CD8-positive, alpha-beta T cell (primary cell): ENCODE measurements at regions of chr11 and their contacts with region 1.

Region 1: DNA sequence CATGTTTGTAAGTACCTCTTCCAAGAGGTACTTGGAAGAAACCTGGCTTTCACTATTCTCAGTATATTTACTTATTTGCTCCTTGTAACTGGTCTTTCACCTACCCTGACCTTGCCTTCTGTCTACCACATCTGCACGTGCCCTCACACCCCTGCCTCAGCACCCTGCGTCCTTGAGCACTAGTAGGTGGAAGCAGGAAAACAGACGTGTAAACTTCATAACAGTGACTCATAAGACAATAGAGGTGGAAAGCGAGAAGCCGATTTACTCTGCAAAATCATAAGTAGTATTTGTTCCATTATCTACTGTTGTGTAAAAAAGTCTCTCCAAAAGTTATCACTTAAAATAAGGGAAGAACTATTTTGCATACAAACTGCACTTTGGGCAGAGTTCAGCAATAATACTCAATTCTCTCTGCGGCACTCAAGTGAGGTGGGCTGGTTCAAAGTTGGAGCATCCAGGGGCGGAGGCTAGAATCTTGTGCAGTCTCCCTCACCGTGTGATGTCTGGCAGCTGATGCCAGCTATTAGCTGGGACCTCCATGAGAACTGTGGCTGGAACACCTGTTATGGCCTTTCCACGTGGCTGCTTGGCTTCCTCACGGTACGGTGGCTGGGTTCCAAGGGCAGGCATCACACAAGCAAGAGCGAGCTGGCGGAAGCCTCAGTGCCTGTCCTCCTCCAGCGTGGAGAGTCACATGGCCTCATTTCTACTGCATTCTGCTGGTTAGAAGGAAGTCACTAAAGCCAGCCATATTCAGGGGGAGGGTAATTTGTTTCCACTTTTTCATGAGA is 30.4 kb downstream of the PACS1 start:
- DNase-seq: peak; percentile 31 to 88 (median 73)
- ATAC-seq: peak; percentile 90
- H3K4me3 ChIP-seq: peak overlapping the region; percentile 40 to 48
- H3K4me3 Mint-ChIP-seq: peak overlapping the region; percentile 82
- H3K27ac ChIP-seq: peak overlapping the region; percentile 45 to 82
- H3K27ac Mint-ChIP-seq: peak overlapping the region; percentile 95
- H3K4me1 ChIP-seq: peaks cover 70% of the 10 kb centered on the region
- H3K4me1 Mint-ChIP-seq: peaks cover 69% of the 10 kb centered on the region
- H3K27me3 ChIP-seq: no peaks in the 10 kb centered on the region
- H3K27me3 Mint-ChIP-seq: no peaks in the 10 kb centered on the region
- CTCF ChIP-seq: no peak

Region 2: GRCh38 chr11:66022401-66023185 is 77.9 kb before region 1 on chr11:
- CTCF ChIA-PET with region 1: no interaction called
- POLR2A ChIA-PET with region 1: no interaction called
- intact Hi-C with region 1: no loop called
- DNase-seq: peak; percentile 63 to 86 (median 80)
- ATAC-seq: peak; percentile 99
- H3K4me3 ChIP-seq: peak overlapping the region in 1 of 2 experiments; percentile 4
- H3K4me3 Mint-ChIP-seq: peak overlapping the region; percentile 43
- H3K27ac ChIP-seq: no peak overlapping the region
- H3K27ac Mint-ChIP-seq: no peak overlapping the region
- H3K4me1 ChIP-seq: peaks cover 7% of the 10 kb centered on the region
- H3K4me1 Mint-ChIP-seq: peaks cover 5% of the 10 kb centered on the region
- H3K27me3 ChIP-seq: no peaks in the 10 kb centered on the region
- H3K27me3 Mint-ChIP-seq: peaks cover 3% of the 10 kb centered on the region
- CTCF ChIP-seq: peak; percentile 97

Region 3: GRCh38 chr11:66112601-66113098 is 12.2 kb after region 1 on chr11:
- CTCF ChIA-PET with region 1: interaction called, 6 read pairs
- POLR2A ChIA-PET with region 1: interaction called, 28 read pairs
- intact Hi-C with region 1: loop called (anchors 1 to 2 kb)
- DNase-seq: no peak
- ATAC-seq: no peak
- H3K4me3 ChIP-seq: no peak overlapping the region
- H3K4me3 Mint-ChIP-seq: peak overlapping the region; percentile 38
- H3K27ac ChIP-seq: peak overlapping the region in 1 of 2 experiments; percentile 47
- H3K27ac Mint-ChIP-seq: peak overlapping the region; percentile 89
- H3K4me1 ChIP-seq: peaks cover 88% of the 10 kb centered on the region
- H3K4me1 Mint-ChIP-seq: peaks cover 94% of the 10 kb centered on the region
- H3K27me3 ChIP-seq: no peaks in the 10 kb centered on the region
- H3K27me3 Mint-ChIP-seq: no peaks in the 10 kb centered on the region
- CTCF ChIP-seq: no peak

Region 4: GRCh38 chr11:66126808-66127555 is 26.5 kb after region 1 on chr11:
- CTCF ChIA-PET with region 1: interaction called, 5 read pairs
- POLR2A ChIA-PET with region 1: interaction called, 3 read pairs
- intact Hi-C with region 1: loop called (anchors 2 kb)
- DNase-seq: peak; percentile 18 to 79 (median 61)
- ATAC-seq: peak; percentile 94
- H3K4me3 ChIP-seq: peak overlapping the region; percentile 2 to 6
- H3K4me3 Mint-ChIP-seq: peak overlapping the region; percentile 78
- H3K27ac ChIP-seq: peak overlapping the region; percentile 37 to 73
- H3K27ac Mint-ChIP-seq: peak overlapping the region; percentile 99
- H3K4me1 ChIP-seq: peaks cover 70% of the 10 kb centered on the region
- H3K4me1 Mint-ChIP-seq: peaks cover 80% of the 10 kb centered on the region
- H3K27me3 ChIP-seq: no peaks in the 10 kb centered on the region
- H3K27me3 Mint-ChIP-seq: no peaks in the 10 kb centered on the region
- CTCF ChIP-seq: no peak